ENCODE measurements at regions of chr17 and their contacts with region 1.

Region 1: DNA sequence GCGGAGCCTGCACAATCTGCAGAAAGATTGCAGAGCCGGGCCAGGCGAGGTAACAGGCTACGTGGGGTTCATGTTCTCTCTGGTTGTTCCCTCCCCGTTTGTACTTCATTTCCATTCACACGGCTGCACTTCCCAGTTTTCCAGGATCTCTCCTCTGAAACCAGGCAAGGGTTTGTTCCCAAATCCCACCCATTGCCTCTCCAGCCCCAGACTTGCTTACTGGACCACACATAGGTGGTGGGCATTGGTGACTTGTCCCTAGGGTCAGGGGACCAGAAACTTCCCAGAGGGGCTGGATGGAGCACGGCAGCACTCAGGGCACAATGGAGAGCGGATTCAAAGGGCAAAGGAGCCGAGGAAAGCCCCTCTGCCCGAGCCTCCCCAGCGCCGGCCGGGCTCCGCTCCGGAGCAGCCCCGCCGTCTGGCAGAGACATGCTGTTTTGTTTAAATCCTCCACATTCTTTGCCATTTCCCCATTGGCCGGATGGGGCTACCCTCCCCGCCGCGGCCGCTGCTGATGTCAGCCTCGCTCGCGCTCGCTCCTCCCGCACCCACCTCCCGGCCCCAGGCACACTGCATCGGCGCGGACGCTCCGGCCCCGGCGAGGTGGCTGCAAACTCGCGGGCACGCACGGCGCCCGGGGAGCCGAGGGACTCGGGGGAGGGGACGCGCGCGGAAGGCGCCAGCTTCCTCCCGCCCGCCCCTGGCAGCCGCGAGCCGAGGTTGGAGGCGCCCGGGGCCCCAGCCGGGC is at the start of gene PITPNC1:
- DNase-seq: peak; percentile 89 to 95 (median 95)
- ATAC-seq: peak; percentile 85 to 93
- H3K4me3 ChIP-seq: peak within 1 kb of the TSS; percentile 90
- H3K27ac ChIP-seq: peak within 1 kb of the TSS; percentile 80
- H3K4me1 ChIP-seq: peaks cover 2% of the 10 kb centered on the region
- H3K27me3 ChIP-seq: no peaks in the 10 kb centered on the region
- total RNA-seq, gene PITPNC1: 17.0 to 29.7 (median 24.9) TPM

Region 2: GRCh38 chr17:67475236-67475937 is 98.5 kb after region 1 on chr17:
- intact Hi-C with region 1: loop called (anchors 2 to 5 kb)
- DNase-seq: peak; percentile 72 to 92 (median 90)
- ATAC-seq: peak; percentile 68 to 81
- H3K4me3 ChIP-seq: no peak overlapping the region
- H3K27ac ChIP-seq: peak overlapping the region; percentile 85
- H3K4me1 ChIP-seq: peaks cover 2% of the 10 kb centered on the region
- H3K27me3 ChIP-seq: no peaks in the 10 kb centered on the region

Region 3: GRCh38 chr17:67602956-67603355 is 226.0 kb after region 1 on chr17:
- intact Hi-C with region 1: loop called in 2 of 4 experiments (anchors 5 to 10 kb)
- DNase-seq: no peak
- ATAC-seq: no peak
- H3K4me3 ChIP-seq: no peak overlapping the region
- H3K27ac ChIP-seq: no peak overlapping the region
- H3K4me1 ChIP-seq: peaks cover 2% of the 10 kb centered on the region
- H3K27me3 ChIP-seq: no peaks in the 10 kb centered on the region

Region 4: GRCh38 chr17:67629971-67630320 is 253.0 kb after region 1 on chr17:
- intact Hi-C with region 1: loop called (anchors 5 to 10 kb)
- DNase-seq: no peak
- ATAC-seq: peak; percentile 25 to 45
- H3K4me3 ChIP-seq: no peak overlapping the region
- H3K27ac ChIP-seq: no peak overlapping the region
- H3K4me1 ChIP-seq: peaks cover 3% of the 10 kb centered on the region
- H3K27me3 ChIP-seq: no peaks in the 10 kb centered on the region

Region 5: GRCh38 chr17:67689534-67690177 is 312.7 kb after region 1 on chr17:
- intact Hi-C with region 1: loop called (anchors 2 to 5 kb)
- DNase-seq: no peak
- ATAC-seq: peak in 1 of 2 donors; percentile 74
- H3K4me3 ChIP-seq: no peak overlapping the region
- H3K27ac ChIP-seq: no peak overlapping the region
- H3K4me1 ChIP-seq: no peaks in the 10 kb centered on the region
- H3K27me3 ChIP-seq: no peaks in the 10 kb centered on the region

Measured in right cardiac atrium (tissue), 5 donors.